A549 (cell line): ENCODE measurements at regions of chr15 and their contacts with region 1.

Region 1: DNA sequence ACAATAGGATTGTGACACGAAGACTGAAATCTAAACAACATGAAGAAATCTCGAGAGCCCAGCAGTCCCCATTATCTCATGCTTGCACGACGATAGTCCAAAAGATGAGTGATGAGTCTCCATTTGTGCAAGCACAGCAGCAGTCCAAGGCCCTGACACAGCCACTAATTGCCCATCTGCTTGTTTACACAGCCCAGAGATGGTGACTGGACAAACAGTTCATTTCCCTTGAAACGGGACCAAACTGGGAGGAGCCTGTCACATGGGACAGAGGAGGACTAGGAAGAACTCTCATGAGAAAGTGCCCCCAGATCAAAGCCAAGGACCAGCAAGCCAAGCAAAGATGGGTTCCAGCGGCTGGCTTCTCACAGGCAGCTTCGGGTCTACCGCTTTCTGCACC is 121.0 kb downstream of the GREM1 start:
- DNase-seq: peak; percentile 29 to 81
- ATAC-seq: peak; percentile 65 to 87; a peak in 5 of 6 replicates
- H3K4me3 ChIP-seq: no peak overlapping the region
- H3K27ac ChIP-seq: peak overlapping the region; percentile 59 to 73
- H3K4me1 ChIP-seq: peaks cover 30% of the 10 kb centered on the region
- CTCF ChIP-seq: no peak
- EP300 ChIP-seq: no peak
- POLR2A ChIP-seq: no peak
- RAD21 ChIP-seq: 0 out of 5 replicates have a peak, but pooled peaks of 1 of the 2 experiments have one; percentile 12

Region 2: GRCh38 chr15:32824777-32825176 is 14.0 kb before region 1 on chr15:
- CTCF ChIA-PET with region 1: interaction called, 39 read pairs
- POLR2A ChIA-PET with region 1: no interaction called
- DNase-seq: peak; percentile 80 to 89
- ATAC-seq: peak; percentile 81 to 86
- H3K4me3 ChIP-seq: no peak overlapping the region; the same call in 2 of the 3 replicates
- H3K27ac ChIP-seq: peak overlapping the region; percentile 79 to 86
- H3K4me1 ChIP-seq: peaks cover 70% of the 10 kb centered on the region
- CTCF ChIP-seq: peak; percentile 41
- EP300 ChIP-seq: peak; percentile 80 to 84; a peak in 4 of 5 replicates
- POLR2A ChIP-seq: no peak
- RAD21 ChIP-seq: peak; percentile 72 to 83